Vagina (tissue), 2 donors: ENCODE measurements at regions of chr10 and their contacts with region 1.

Region 1: DNA sequence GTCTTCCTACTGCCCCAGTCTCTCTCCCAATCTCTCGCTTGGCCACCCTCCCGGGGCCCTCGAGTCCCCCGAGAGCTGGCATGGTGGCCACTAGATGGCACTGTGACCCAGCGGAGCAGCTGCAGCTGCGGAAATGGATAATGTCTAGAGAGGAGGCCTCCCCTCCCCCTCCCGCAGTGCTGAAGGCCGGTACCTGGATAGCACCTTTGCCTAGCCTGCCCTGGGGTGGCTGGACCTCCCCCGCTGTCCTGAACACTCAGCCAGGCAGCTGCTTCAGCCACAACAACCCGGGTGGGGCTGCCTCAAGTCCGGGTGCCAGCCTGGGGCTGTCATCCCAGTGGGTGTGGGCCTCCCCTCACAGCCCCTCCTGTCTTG is 65.2 kb downstream of the GOLGA7B start:
- DNase-seq: no peak
- H3K4me3 ChIP-seq: no peak overlapping the region
- H3K27ac ChIP-seq: no peak overlapping the region
- H3K4me1 ChIP-seq: peaks cover 29% of the 10 kb centered on the region
- H3K27me3 ChIP-seq: no peaks in the 10 kb centered on the region
- CTCF ChIP-seq: peak; percentile 57 to 91 (median 63)
- POLR2A ChIP-seq: no peak

Region 2: DNA sequence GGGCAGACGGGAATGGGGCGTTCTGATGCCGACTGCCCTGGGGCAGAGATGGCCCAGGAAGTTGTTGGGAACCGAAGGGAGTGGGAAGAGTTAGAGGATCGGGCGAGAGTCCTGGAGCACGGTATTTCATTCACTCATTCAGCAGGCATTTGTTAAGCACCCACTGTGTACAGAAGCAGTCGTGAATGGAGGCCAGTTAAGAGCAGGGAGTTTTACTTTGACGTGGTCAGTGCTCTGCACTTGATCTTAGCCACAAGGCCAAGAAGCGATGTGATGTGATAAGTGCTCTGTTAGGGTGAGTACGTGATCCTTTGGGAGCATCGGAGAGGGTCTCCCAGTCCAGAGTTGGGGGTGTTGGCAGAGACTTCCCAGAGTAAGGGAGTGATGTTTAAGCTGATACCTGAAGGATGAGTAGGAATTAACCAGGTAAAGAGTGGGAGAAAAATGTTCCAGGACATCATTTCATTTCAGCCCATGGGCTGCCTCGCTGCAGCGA is 177.0 kb before region 1 on chr10:
- intact Hi-C with region 1: no loop called
- DNase-seq: no peak
- H3K4me3 ChIP-seq: peak overlapping the region; percentile 73 to 77
- H3K27ac ChIP-seq: peak overlapping the region; percentile 84
- H3K4me1 ChIP-seq: peaks cover 32% of the 10 kb centered on the region
- H3K27me3 ChIP-seq: no peaks in the 10 kb centered on the region
- CTCF ChIP-seq: no peak
- POLR2A ChIP-seq: no peak

Region 3: GRCh38 chr10:97780841-97781617 is 133.8 kb before region 1 on chr10:
- intact Hi-C with region 1: no loop called
- DNase-seq: no peak
- H3K4me3 ChIP-seq: no peak overlapping the region
- H3K27ac ChIP-seq: no peak overlapping the region
- H3K4me1 ChIP-seq: no peaks in the 10 kb centered on the region
- H3K27me3 ChIP-seq: no peaks in the 10 kb centered on the region
- CTCF ChIP-seq: no peak
- POLR2A ChIP-seq: no peak

Region 4: GRCh38 chr10:97903128-97904017 is 11.5 kb before region 1 on chr10:
- intact Hi-C with region 1: no loop called
- DNase-seq: no peak
- H3K4me3 ChIP-seq: no peak overlapping the region
- H3K27ac ChIP-seq: no peak overlapping the region
- H3K4me1 ChIP-seq: no peaks in the 10 kb centered on the region
- H3K27me3 ChIP-seq: no peaks in the 10 kb centered on the region
- CTCF ChIP-seq: no peak
- POLR2A ChIP-seq: no peak

Region 5: DNA sequence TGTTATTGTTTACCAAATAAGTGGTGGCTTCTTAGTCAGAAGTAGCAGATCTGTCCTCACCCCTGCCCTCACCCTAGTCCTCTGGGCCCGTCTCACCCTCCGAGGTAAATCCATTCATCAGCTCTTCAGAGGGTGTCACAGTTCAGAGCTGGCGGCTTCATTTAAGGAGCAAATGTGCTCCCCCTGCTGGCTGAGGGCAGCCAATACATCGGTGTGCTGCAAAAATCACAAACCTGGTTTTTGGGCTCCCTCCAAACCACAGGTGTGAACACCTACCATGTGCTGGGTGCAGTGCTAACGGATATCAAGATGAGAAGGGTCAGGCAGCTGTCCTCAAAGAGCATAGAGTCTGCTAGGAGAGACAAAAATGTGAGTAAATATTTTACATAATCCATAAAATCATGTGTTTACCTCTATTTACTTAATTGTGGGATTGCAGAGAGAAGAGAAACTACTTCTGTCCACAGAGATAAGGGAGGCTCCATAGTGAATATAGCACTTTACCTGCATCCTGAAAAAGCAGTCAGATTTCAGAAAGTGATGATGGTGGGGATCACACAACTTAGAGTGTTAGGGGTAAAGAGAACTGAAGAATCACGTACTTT is 131.1 kb after region 1 on chr10:
- intact Hi-C with region 1: loop called (anchors 10 kb)
- DNase-seq: no peak
- H3K4me3 ChIP-seq: no peak overlapping the region
- H3K27ac ChIP-seq: no peak overlapping the region
- H3K4me1 ChIP-seq: peaks cover 4% of the 10 kb centered on the region
- H3K27me3 ChIP-seq: no peaks in the 10 kb centered on the region
- CTCF ChIP-seq: peak; percentile 43 to 64 (median 53)
- POLR2A ChIP-seq: no peak